ENCODE measurements at regions of chr3 and their contacts with region 1.

Region 1: DNA sequence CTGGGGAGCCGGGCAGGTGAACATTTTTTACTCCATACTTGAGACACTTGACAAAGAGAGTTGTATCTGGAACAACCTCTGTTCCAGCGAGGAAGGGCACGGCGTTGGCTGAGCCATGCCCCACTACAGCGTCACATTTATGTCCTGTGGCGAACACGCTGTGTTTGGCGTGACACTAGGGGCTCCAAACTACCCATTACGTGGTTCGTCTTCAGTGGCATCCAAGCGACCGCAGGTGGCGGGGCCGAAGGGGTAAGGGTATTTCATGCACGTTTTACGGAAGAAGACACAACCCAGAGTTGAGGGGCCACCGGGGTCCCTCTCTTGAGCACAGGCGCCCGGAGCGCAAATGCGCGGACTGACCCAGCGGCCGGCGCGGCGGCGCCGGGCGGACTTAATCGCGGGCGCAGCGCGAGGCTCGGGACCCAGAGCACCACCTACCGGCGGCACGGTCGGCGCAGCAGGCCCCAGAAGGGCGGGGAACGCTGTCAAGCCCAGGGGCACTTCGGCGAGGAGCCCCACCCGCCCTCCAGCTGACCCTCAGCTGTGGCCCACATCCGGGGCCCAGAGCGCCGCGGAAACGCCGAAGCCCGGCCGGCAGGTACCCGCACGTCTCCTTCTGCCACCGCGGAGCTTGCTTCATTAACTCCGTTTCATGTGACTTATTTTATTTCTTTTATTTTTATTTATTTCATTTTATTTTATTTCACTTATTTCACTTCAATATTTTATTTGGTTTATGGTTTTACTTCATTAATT is 36.4 kb upstream of the TRIM71 start:
- DNase-seq: peak; percentile 89
- H3K4me3 Mint-ChIP-seq: peak overlapping the region; percentile 89
- H3K27ac Mint-ChIP-seq: peak overlapping the region; percentile 50
- H3K4me1 Mint-ChIP-seq: no peaks in the 10 kb centered on the region
- H3K27me3 Mint-ChIP-seq: no peaks in the 10 kb centered on the region
- CTCF ChIP-seq: peak; percentile 79

Region 2: GRCh38 chr3:32848215-32848614 is 66.8 kb after region 1 on chr3:
- CTCF ChIA-PET with region 1: no interaction called
- intact Hi-C with region 1: no loop called
- DNase-seq: no peak
- H3K4me3 Mint-ChIP-seq: no peak overlapping the region
- H3K27ac Mint-ChIP-seq: no peak overlapping the region
- H3K4me1 Mint-ChIP-seq: no peaks in the 10 kb centered on the region
- H3K27me3 Mint-ChIP-seq: peaks cover 18% of the 10 kb centered on the region
- CTCF ChIP-seq: no peak

Region 3: GRCh38 chr3:32901432-32902409 is 120.3 kb after region 1 on chr3:
- CTCF ChIA-PET with region 1: interaction called, 7 read pairs
- intact Hi-C with region 1: loop called (anchors 1 kb)
- DNase-seq: peak; percentile 54
- H3K4me3 Mint-ChIP-seq: peak overlapping the region; percentile 87
- H3K27ac Mint-ChIP-seq: no peak overlapping the region
- H3K4me1 Mint-ChIP-seq: no peaks in the 10 kb centered on the region
- H3K27me3 Mint-ChIP-seq: peaks cover 25% of the 10 kb centered on the region
- CTCF ChIP-seq: no peak

Region 4: GRCh38 chr3:32934150-32934742 is 152.9 kb after region 1 on chr3:
- CTCF ChIA-PET with region 1: no interaction called
- intact Hi-C with region 1: loop called (anchors 5 kb)
- DNase-seq: peak; percentile 9
- H3K4me3 Mint-ChIP-seq: no peak overlapping the region
- H3K27ac Mint-ChIP-seq: no peak overlapping the region
- H3K4me1 Mint-ChIP-seq: no peaks in the 10 kb centered on the region
- H3K27me3 Mint-ChIP-seq: peaks cover 21% of the 10 kb centered on the region
- CTCF ChIP-seq: peak; percentile 26

Measured in Calu3 (cell line).